GM12878 (cell line): ENCODE measurements at regions of chr11 and their contacts with region 1.

Region 1: GRCh38 chr11:131867457-131868257 is 497.2 kb downstream of the NTM start:
- DNase-seq: no peak
- ATAC-seq: peak; percentile 96
- H3K4me3 ChIP-seq: no peak overlapping the region
- H3K27ac ChIP-seq: no peak overlapping the region
- H3K4me1 ChIP-seq: no peaks in the 10 kb centered on the region; the same call in 1 of the 2 replicates
- H3K27me3 ChIP-seq: 0 out of 4 replicates have a peak, but pooled peaks cover 0 to 1% of the 10 kb centered on the region in 2 experiments
- CTCF ChIP-seq: peak; percentile 86 to 93 (median 90)
- EP300 ChIP-seq: no peak
- POLR2A ChIP-seq: no peak
- RAD21 ChIP-seq: peak; percentile 97

Region 2: GRCh38 chr11:131748151-131749050 is 119.3 kb before region 1 on chr11:
- CTCF ChIA-PET with region 1: interaction called, 23 read pairs
- POLR2A ChIA-PET with region 1: no interaction called
- RAD21 ChIA-PET with region 1: interaction called, 5 read pairs
- SMC1A ChIA-PET with region 1: interaction called, 5 read pairs
- in situ Hi-C with region 1: no loop called
- intact Hi-C with region 1: loop called (anchors 1 kb)
- DNase-seq: no peak
- ATAC-seq: peak; percentile 92
- H3K4me3 ChIP-seq: no peak overlapping the region
- H3K27ac ChIP-seq: no peak overlapping the region
- H3K4me1 ChIP-seq: no peaks in the 10 kb centered on the region
- H3K27me3 ChIP-seq: no peaks in the 10 kb centered on the region; a peak in 3 of 4 replicates
- CTCF ChIP-seq: peak; percentile 77 to 79 (median 77)
- EP300 ChIP-seq: no peak
- POLR2A ChIP-seq: no peak
- RAD21 ChIP-seq: peak; percentile 63

Region 3: DNA sequence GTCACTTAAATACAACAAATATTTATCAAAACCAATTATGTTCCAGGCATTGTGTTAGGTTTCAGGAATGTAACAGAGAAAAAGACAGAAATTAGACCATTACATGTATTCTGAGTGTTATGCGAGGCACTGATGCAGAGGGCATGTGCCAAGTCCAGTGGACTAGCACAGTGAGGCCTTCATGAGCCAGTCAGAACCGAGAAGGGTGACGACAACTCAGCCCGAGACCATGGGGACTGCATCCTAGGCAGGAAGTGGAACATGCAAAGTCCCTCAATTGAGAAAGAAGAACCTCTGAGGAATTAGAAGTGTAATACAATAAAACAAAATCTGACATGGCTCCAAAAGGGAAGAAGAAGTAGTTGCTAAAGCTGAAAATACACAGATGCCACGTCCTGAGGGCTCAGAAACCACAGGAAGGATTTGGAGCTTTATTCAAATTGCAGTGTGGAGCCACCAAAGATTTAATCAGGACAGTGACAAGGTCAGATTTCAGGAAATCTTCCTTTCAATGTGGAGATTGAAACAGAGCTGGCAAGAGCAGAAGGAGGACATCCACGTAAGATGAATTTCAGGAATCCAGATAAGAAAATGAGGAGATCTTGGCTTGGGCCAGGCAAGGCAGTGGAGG is 32.4 kb after region 1 on chr11:
- CTCF ChIA-PET with region 1: interaction called, 215 read pairs
- POLR2A ChIA-PET with region 1: interaction called, 3 read pairs
- RAD21 ChIA-PET with region 1: interaction called, 136 read pairs
- SMC1A ChIA-PET with region 1: interaction called, 25 read pairs
- in situ Hi-C with region 1: no loop called
- intact Hi-C with region 1: no loop called
- DNase-seq: no peak
- ATAC-seq: peak; percentile 53; the same call in 2 of the 3 replicates
- H3K4me3 ChIP-seq: no peak overlapping the region
- H3K27ac ChIP-seq: no peak overlapping the region
- H3K4me1 ChIP-seq: peaks cover 7% of the 10 kb centered on the region
- H3K27me3 ChIP-seq: no peaks in the 10 kb centered on the region
- CTCF ChIP-seq: no peak
- EP300 ChIP-seq: no peak
- POLR2A ChIP-seq: no peak
- RAD21 ChIP-seq: no peak

Region 4: DNA sequence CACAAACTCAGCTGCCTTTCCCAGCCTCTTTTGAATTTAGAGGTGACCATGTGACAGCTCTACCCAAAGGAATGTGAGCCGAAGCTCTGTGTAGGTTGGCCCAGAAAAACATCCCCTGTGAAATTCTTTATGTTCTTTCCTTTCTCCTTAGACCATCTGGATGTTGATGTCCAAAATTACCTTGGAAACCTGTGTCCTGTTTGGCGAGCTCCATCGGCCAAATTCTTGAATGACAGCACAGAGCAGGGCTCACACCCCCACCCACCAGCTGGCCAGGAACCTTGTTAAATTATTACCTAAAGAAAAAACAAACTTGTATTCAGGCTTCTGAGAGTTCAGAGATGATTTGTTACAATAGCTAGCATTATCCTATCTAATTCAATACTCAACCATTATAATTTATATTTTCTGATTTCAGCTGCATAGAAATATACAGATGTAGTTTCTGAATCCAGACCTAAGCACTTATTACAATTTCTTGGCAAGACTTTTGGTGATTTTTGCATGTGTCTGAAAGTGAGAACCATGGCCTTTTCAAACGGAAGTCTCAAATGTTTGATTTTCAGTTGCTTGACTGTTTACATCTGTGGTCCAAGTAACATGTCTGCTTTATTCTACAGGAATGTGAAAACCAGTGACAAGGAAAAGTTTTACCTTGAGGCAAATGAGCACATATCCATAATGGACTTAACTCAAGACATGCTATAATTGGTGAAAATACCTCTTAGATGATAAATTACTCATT is 57.0 kb after region 1 on chr11:
- CTCF ChIA-PET with region 1: interaction called, 14 read pairs
- POLR2A ChIA-PET with region 1: no interaction called
- RAD21 ChIA-PET with region 1: interaction called, 6 read pairs
- SMC1A ChIA-PET with region 1: interaction called, 4 read pairs
- in situ Hi-C with region 1: no loop called
- intact Hi-C with region 1: no loop called
- DNase-seq: no peak
- ATAC-seq: peak; percentile 56
- H3K4me3 ChIP-seq: no peak overlapping the region
- H3K27ac ChIP-seq: no peak overlapping the region
- H3K4me1 ChIP-seq: peaks cover 10% of the 10 kb centered on the region; the same call in 1 of the 2 replicates
- H3K27me3 ChIP-seq: no peaks in the 10 kb centered on the region; a peak in 2 of 4 replicates
- CTCF ChIP-seq: no peak
- EP300 ChIP-seq: no peak
- POLR2A ChIP-seq: no peak
- RAD21 ChIP-seq: no peak

Region 5: DNA sequence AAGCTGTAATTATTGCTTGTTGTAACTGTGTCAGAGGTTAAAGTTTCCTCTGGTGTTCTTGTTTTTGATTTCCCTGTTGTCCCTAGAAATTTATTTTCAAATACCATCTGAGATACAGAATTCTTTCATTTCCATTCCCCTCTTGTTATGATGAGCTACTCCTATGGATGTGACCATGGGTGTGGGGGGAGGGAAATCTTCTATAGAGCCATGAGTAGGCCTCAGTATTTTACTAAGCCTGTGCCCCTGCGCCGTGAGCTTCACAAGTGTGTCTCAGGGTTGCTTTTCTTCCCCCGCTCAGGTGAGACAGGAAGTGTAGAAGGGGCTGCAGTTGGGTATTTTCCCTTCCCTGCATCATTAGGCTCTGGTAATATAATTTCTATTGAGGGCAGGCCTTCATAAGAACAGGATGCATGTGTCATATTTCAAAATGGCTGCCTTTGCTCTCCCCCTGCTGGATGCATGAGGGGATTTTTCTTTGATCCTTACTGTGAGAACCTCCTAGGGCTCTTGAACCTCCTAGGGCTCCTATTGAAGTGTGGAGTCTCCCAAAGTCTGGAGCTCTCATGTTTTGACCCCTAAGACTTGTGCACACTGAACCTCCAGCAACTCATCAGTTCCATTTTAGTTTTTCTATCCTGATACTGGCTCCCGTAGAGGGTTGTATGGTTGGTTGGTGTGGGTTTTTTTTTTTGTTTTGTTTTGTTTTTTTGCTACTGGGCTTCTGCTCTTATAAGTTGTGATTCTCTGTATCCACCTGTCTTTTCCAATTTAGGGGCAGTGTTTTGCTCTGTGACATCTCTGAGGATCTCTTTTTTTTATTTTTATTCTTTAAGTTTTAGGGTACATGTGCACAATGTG is 161.0 kb after region 1 on chr11:
- CTCF ChIA-PET with region 1: interaction called, 82 read pairs
- POLR2A ChIA-PET with region 1: no interaction called
- RAD21 ChIA-PET with region 1: interaction called, 19 read pairs
- SMC1A ChIA-PET with region 1: interaction called, 80 read pairs
- in situ Hi-C with region 1: loop called (anchors 5 kb)
- intact Hi-C with region 1: loop called (anchors 1 kb)
- DNase-seq: no peak
- ATAC-seq: peak; percentile 80
- H3K4me3 ChIP-seq: no peak overlapping the region
- H3K27ac ChIP-seq: no peak overlapping the region
- H3K4me1 ChIP-seq: no peaks in the 10 kb centered on the region
- H3K27me3 ChIP-seq: no peaks in the 10 kb centered on the region
- CTCF ChIP-seq: peak; percentile 51 to 59 (median 52)
- EP300 ChIP-seq: no peak
- POLR2A ChIP-seq: no peak
- RAD21 ChIP-seq: peak; percentile 60

Region 6: GRCh38 chr11:132158093-132158492 is 290.4 kb after region 1 on chr11:
- CTCF ChIA-PET with region 1: interaction called, 3 read pairs
- POLR2A ChIA-PET with region 1: no interaction called
- RAD21 ChIA-PET with region 1: interaction called, 3 read pairs
- SMC1A ChIA-PET with region 1: interaction called, 5 read pairs
- in situ Hi-C with region 1: no loop called
- intact Hi-C with region 1: loop called (anchors 10 kb)
- DNase-seq: no peak
- ATAC-seq: peak; percentile 69
- H3K4me3 ChIP-seq: no peak overlapping the region
- H3K27ac ChIP-seq: no peak overlapping the region
- H3K4me1 ChIP-seq: no peaks in the 10 kb centered on the region
- H3K27me3 ChIP-seq: peaks cover 0 to 1% of the 10 kb centered on the region in 2 experiments; a peak in 1 of 4 replicates
- CTCF ChIP-seq: peak; percentile 43 to 61 (median 46)
- EP300 ChIP-seq: no peak
- POLR2A ChIP-seq: no peak
- RAD21 ChIP-seq: peak; percentile 38

Region 7: DNA sequence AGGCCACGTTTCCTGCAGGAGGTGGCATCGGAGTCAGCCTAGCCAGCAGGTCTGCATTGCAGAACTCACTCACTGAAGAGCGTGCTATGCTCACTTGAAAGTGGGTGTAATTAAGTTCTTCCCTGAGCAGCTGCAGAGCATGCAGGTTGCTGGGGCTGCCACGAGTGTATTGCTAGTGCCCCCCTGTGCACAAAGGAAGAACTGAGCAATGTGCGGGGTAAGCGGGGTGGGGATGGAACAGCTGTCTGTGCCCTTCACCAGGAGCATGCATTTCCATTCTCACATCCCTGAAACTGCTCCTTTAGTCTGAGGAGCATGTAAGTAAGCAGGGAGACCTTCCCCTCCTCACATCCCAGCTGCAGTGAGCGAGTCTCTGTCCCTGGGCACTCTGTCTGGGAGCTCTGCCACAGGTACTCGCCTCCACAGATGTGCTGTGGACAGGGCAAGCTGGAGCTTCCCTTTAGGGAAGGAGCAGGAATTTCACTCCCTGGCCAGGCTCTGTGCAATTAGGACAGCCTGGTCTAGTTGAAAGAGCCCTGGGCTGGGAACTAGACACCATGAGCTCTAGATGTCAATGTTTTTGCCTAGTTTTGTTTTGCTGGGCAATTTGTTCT is 534.5 kb after region 1 on chr11:
- CTCF ChIA-PET with region 1: interaction called, 6 read pairs
- POLR2A ChIA-PET with region 1: no interaction called
- RAD21 ChIA-PET with region 1: interaction called, 12 read pairs
- SMC1A ChIA-PET with region 1: interaction called, 4 read pairs
- in situ Hi-C with region 1: loop called (anchors 10 kb)
- intact Hi-C with region 1: loop called (anchors 1 kb)
- DNase-seq: peak; percentile 24
- ATAC-seq: peak; percentile 100
- H3K4me3 ChIP-seq: no peak overlapping the region
- H3K27ac ChIP-seq: no peak overlapping the region
- H3K4me1 ChIP-seq: no peaks in the 10 kb centered on the region
- H3K27me3 ChIP-seq: no peaks in the 10 kb centered on the region
- CTCF ChIP-seq: peak; percentile 82 to 85 (median 83)
- EP300 ChIP-seq: no peak
- POLR2A ChIP-seq: no peak
- RAD21 ChIP-seq: peak; percentile 97